HepG2 (cell line): ENCODE measurements at regions of chr16 and their contacts with region 1.

Region 1: GRCh38 chr16:70460737-70461261 is 6.4 kb downstream of the FCSK start:
- DNase-seq: no peak
- ATAC-seq: peak; percentile 48
- H3K4me3 ChIP-seq: no peak overlapping the region
- H3K27ac ChIP-seq: peak overlapping the region; percentile 25
- H3K4me1 ChIP-seq: peaks cover 29% of the 10 kb centered on the region
- H3K27me3 ChIP-seq: no peaks in the 10 kb centered on the region
- CTCF ChIP-seq: no peak
- EP300 ChIP-seq: no peak
- POLR2A ChIP-seq: no peak
- RAD21 ChIP-seq: no peak

Region 2: DNA sequence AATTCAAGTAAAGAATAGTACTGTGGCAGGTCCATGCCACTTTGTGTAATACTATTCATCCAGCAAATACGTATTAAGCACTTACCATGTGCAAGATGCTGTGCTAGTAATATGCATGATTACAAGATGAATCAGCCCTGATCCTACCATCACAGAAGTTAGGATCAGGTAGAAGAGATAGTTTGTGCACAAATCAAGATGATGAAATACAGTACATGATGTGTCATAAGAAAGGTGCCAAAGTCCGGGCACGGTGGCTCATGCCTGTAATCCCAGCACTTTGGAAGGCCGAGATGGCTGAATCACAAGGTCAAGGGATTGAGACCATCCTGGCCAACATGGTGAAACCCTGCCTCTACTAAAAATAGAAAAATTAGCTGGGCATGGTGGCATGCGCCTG is 51.7 kb after region 1 on chr16:
- CTCF ChIA-PET with region 1: no interaction called
- POLR2A ChIA-PET with region 1: no interaction called
- in situ Hi-C with region 1: loop called (anchors 5 kb)
- intact Hi-C with region 1: no loop called
- DNase-seq: no peak
- ATAC-seq: no peak
- H3K4me3 ChIP-seq: no peak overlapping the region
- H3K27ac ChIP-seq: no peak overlapping the region
- H3K4me1 ChIP-seq: peaks cover 9% of the 10 kb centered on the region
- H3K27me3 ChIP-seq: no peaks in the 10 kb centered on the region
- CTCF ChIP-seq: no peak
- EP300 ChIP-seq: no peak
- POLR2A ChIP-seq: no peak
- RAD21 ChIP-seq: no peak